ENCODE measurements at regions of chr5 and their contacts with region 1.

Region 1: DNA sequence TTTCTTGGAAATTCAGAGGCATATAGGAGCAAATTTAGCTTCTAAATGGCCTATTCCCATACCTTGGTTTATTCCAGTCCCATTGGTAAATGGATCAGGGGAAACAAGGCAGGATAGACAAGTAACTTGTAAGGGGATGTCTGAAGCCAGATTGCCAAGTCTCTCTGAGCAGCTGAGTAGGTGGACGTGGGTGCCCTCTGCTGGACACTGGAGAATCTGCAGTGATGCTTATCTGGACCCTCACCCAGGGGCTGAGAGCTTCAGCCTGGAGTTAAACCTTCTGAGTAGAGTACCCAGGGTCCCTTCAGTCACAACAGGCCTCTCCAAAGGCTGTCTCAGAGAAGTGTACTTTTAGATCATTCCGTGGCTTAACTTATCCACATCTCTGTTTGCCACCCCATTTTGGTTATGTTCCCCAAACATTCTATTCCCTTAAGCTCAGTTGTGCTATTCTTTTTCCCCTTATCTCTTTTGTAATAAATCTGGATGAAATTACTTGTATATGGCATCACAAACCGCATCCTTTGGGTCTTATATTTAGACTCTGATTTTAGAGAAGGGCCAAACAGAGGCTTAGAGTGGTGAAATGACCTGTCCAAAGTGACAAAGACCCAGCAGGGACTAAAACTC is 218.3 kb upstream of the GLRA1 start:
- DNase-seq: peak; percentile 3
- ATAC-seq: peak; percentile 96
- H3K4me3 ChIP-seq: no peak overlapping the region
- H3K27ac ChIP-seq: no peak overlapping the region
- H3K4me1 ChIP-seq: no peaks in the 10 kb centered on the region
- H3K27me3 ChIP-seq: no peaks in the 10 kb centered on the region; a peak in 1 of 4 replicates
- CTCF ChIP-seq: peak; percentile 90 to 92 (median 90)
- EP300 ChIP-seq: no peak
- POLR2A ChIP-seq: no peak
- RAD21 ChIP-seq: peak; percentile 86

Region 2: DNA sequence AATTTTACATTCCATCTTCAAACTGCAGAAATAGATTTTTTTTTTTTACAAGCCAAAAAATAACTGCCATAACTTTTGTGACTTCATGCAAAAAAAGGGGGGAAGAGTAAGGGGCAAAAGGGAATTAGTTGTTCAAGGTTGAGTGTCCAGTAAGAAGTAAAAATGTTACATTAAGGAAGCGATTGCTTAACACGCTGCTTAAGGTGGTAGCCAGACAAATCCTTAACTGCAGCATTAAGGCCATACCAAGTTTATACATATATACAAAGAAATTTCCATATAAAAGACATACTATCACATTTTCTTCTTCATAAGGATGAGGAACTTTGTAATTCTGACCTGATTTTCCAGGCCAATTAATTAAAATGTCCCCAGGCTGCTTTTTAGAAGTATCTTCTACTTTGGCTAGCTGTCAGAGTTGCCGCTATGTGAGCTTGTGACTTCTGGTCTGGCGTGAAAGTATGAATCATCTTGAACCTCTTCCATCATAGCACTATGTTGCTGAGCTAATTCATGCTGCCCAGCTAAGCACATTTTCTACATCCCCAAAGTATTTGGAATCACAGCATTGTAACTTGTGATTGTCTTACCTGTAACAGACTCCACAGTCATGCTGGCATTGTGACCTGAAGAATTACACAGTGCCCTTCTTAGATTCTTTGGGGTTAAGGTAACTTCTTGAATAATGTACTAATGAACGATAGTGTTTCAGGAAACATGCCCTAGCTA is 331.2 kb before region 1 on chr5:
- CTCF ChIA-PET with region 1: interaction called, 11 read pairs
- POLR2A ChIA-PET with region 1: no interaction called
- RAD21 ChIA-PET with region 1: no interaction called
- SMC1A ChIA-PET with region 1: interaction called, 5 read pairs
- in situ Hi-C with region 1: no loop called
- intact Hi-C with region 1: no loop called
- DNase-seq: no peak
- ATAC-seq: no peak
- H3K4me3 ChIP-seq: no peak overlapping the region
- H3K27ac ChIP-seq: no peak overlapping the region
- H3K4me1 ChIP-seq: no peaks in the 10 kb centered on the region
- H3K27me3 ChIP-seq: no peaks in the 10 kb centered on the region
- CTCF ChIP-seq: no peak
- EP300 ChIP-seq: no peak
- POLR2A ChIP-seq: no peak
- RAD21 ChIP-seq: no peak

Region 3: DNA sequence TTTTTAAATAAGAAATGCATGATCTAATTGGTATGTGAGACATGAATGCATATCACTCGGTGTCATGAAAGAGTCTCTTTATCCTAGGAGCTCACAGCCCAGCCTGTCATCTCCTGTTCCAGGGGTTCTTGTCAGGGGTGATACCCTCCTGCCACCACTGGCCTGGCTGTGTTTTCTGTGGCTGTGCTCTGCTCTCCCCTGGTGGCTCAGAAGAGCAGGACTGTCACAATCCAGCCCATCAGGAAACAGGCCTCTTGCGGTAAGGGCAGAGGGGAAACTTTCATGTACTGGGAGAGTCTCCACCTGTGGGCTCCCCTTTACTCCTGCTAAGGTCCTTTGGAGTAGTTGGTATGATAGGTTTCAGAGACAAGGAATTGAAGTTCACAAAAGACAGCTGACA is 21.9 kb after region 1 on chr5:
- CTCF ChIA-PET with region 1: interaction called, 11 read pairs
- POLR2A ChIA-PET with region 1: no interaction called
- RAD21 ChIA-PET with region 1: no interaction called
- SMC1A ChIA-PET with region 1: interaction called, 3 read pairs
- in situ Hi-C with region 1: no loop called
- intact Hi-C with region 1: no loop called
- DNase-seq: no peak
- ATAC-seq: 0 out of 3 replicates have a peak, but pooled peaks have one; percentile 28
- H3K4me3 ChIP-seq: no peak overlapping the region
- H3K27ac ChIP-seq: no peak overlapping the region
- H3K4me1 ChIP-seq: no peaks in the 10 kb centered on the region
- H3K27me3 ChIP-seq: no peaks in the 10 kb centered on the region
- CTCF ChIP-seq: no peak
- EP300 ChIP-seq: no peak
- POLR2A ChIP-seq: no peak
- RAD21 ChIP-seq: no peak

Region 4: GRCh38 chr5:152271420-152271819 is 128.5 kb after region 1 on chr5:
- CTCF ChIA-PET with region 1: no interaction called
- POLR2A ChIA-PET with region 1: no interaction called
- RAD21 ChIA-PET with region 1: interaction called, 3 read pairs
- SMC1A ChIA-PET with region 1: no interaction called
- in situ Hi-C with region 1: no loop called
- intact Hi-C with region 1: loop called (anchors 2 kb)
- DNase-seq: peak; percentile 8
- ATAC-seq: peak; percentile 68
- H3K4me3 ChIP-seq: no peak overlapping the region
- H3K27ac ChIP-seq: no peak overlapping the region
- H3K4me1 ChIP-seq: no peaks in the 10 kb centered on the region
- H3K27me3 ChIP-seq: no peaks in the 10 kb centered on the region
- CTCF ChIP-seq: peak in 1 of 3 experiments; percentile 35; a peak in 2 of 6 replicates
- EP300 ChIP-seq: no peak
- POLR2A ChIP-seq: no peak
- RAD21 ChIP-seq: 0 out of 2 replicates have a peak, but pooled peaks have one; percentile 31

Region 5: DNA sequence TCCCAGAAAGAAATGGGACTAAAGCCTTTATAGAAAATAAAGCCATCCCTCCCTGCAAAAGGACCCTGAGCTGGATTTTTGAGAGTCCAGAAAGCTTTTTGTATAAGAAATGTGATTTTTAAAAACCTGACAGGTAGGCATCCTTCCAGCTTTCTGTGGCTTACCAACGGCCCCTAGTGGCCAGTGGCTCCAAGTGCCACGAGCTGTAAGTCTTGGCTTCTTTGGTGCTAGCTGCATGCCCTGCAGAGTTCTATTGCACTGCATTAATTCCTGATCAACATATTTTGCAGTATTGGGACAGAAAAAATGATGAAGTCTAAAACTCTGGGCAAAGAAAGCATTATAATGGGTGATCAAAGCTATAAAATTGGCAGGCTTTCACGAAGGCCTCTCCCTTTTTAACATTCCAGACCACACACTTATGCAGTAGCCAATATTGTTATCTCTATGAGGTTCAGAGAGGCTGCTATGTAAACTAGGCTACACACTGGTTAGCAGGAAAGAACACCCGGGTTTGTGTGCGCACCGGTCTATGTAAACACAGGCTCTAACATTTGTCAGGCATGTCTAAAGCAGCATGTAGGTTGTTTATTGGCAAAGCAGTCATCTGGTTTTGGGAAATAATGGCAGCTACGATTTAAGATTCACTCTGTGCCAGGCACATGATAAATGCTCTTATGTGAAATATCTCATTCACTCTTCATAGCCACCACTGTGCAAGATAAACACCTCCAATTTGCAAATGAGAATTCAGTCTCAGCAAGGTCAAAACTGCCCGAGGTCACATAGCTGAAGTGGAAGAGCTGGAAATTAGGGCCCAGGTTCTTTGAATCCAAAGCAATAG is 206.9 kb after region 1 on chr5:
- CTCF ChIA-PET with region 1: interaction called, 32 read pairs
- POLR2A ChIA-PET with region 1: no interaction called
- RAD21 ChIA-PET with region 1: interaction called, 15 read pairs
- SMC1A ChIA-PET with region 1: interaction called, 8 read pairs
- in situ Hi-C with region 1: no loop called
- intact Hi-C with region 1: no loop called
- DNase-seq: no peak
- ATAC-seq: peak; percentile 92
- H3K4me3 ChIP-seq: no peak overlapping the region
- H3K27ac ChIP-seq: no peak overlapping the region
- H3K4me1 ChIP-seq: no peaks in the 10 kb centered on the region
- H3K27me3 ChIP-seq: no peaks in the 10 kb centered on the region
- CTCF ChIP-seq: peak; percentile 82 to 92 (median 90)
- EP300 ChIP-seq: no peak
- POLR2A ChIP-seq: no peak
- RAD21 ChIP-seq: peak; percentile 69

Region 6: GRCh38 chr5:152514827-152515397 is 372.0 kb after region 1 on chr5:
- CTCF ChIA-PET with region 1: interaction called, 4 read pairs
- POLR2A ChIA-PET with region 1: no interaction called
- RAD21 ChIA-PET with region 1: interaction called, 3 read pairs
- SMC1A ChIA-PET with region 1: interaction called, 4 read pairs
- in situ Hi-C with region 1: no loop called
- intact Hi-C with region 1: loop called (anchors 5 kb)
- DNase-seq: no peak
- ATAC-seq: peak; percentile 56; the same call in 2 of the 3 replicates
- H3K4me3 ChIP-seq: no peak overlapping the region
- H3K27ac ChIP-seq: no peak overlapping the region
- H3K4me1 ChIP-seq: no peaks in the 10 kb centered on the region
- H3K27me3 ChIP-seq: no peaks in the 10 kb centered on the region; a peak in 1 of 4 replicates
- CTCF ChIP-seq: peak; percentile 36 to 41 (median 39); a peak in 4 of 6 replicates
- EP300 ChIP-seq: no peak
- POLR2A ChIP-seq: no peak
- RAD21 ChIP-seq: peak; percentile 36

Measured in GM12878 (cell line).